ENCODE measurements at regions of chr7 and their contacts with region 1.

Region 1: DNA sequence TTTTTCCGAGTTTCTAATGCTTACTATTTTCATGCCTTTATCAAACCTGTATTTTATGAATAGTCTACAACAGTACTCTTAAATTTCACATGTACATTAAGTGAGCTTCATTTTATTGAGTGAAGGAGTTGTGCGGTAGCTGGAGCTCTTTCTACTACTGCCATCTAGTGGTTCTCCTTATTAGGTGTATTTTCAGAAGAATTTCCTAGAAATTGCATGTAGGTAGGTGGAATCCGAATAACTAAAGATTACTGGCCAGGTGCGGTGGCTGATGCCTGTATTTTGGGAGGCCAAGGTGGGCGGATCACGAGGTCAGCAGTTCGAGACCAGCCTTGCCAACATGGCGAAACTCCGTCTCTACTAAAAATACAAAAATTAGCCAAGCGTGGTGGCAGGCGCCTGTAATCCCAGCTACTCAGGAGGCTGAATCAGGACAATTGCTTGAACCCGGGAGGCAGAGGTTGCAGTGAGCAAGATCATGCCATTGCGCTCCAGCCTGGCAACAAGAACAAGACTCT is 38.3 kb downstream of the LRRC72 start:
- DNase-seq: no peak
- ATAC-seq: peak; percentile 47 to 50

Region 2: GRCh38 chr7:16078076-16078952 is 486.7 kb before region 1 on chr7:
- intact Hi-C with region 1: loop called (anchors 2 to 10 kb)
- DNase-seq: no peak
- ATAC-seq: peak; percentile 53 to 61

Region 3: GRCh38 chr7:16083931-16084330 is 481.0 kb before region 1 on chr7:
- intact Hi-C with region 1: loop called (anchors 2 to 10 kb)
- DNase-seq: no peak
- ATAC-seq: no peak

Region 4: GRCh38 chr7:16114633-16115032 is 450.3 kb before region 1 on chr7:
- intact Hi-C with region 1: loop called (anchors 5 to 10 kb)
- DNase-seq: no peak
- ATAC-seq: no peak

Region 5: DNA sequence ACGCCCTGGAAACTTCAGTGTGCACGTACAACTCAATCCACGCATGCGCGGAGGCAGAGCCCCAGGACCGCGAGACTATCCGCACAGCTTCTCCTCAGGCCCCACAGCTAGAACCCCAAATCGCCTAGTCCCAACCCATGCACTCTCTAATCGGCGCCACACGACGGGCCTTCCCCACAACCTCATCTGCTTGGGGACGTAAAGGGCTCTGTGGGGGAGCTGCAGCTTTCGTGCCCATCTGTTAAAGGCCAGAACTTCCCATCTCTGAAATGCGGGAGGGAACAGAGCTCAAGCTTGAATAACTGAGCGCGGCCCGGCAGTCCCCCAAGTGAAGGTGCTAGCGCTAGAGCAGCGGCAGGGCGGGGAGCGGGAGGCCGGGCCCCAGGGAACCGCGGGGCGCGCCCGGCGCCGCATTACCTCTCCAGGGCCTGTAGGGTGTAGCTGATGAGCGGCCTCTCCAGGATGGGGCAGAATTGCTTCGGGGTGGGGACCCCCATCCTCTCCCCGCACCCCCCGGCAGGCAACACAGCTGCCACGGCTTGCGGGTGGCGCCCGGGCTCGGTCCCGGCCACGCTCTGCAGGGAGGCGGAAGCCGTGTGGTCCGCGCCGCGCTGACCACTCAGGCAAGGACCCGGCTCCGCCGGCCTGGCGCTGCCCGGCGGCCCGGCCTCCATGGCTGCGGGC is 144.2 kb before region 1 on chr7:
- intact Hi-C with region 1: no loop called
- DNase-seq: peak; percentile 90
- ATAC-seq: peak; percentile 89 to 95

Region 6: DNA sequence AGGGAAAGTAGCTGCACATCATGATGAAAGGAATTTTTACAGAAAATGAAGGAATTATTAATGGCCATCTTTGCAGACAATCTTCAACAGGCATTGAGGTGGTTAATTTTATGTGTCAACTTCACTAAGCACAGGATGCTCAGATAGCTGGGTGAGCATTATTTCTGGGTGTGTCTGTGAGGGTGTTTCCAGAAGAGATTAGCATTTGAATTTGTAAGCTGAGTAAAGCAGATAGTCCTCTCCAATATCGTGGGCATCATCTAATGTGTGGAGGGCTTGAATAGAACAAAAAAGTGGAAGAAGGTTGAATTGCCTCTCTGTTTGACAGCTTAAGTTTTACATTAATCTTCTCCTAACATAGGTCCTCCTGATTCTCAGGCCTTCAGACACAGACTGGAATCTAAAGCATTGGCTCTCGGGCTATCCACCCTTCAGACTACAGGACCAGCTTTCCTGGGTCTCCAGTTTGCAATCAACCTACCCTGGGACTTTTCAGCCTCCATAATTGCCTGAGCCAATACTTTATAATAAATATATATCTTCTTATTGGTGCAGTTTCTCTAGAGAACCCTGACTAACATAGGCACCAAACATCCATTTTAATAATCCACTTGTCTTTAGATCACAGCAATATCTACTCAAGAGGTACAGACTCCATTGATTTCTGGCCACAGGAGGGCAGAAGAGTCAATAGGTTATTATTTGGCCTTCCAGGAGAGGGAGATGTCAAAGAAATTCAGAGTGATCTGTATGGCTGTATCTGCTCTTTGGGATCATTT is 133.1 kb before region 1 on chr7:
- intact Hi-C with region 1: loop called (anchors 2 to 10 kb)
- DNase-seq: no peak
- ATAC-seq: peak; percentile 58 to 76

Region 7: DNA sequence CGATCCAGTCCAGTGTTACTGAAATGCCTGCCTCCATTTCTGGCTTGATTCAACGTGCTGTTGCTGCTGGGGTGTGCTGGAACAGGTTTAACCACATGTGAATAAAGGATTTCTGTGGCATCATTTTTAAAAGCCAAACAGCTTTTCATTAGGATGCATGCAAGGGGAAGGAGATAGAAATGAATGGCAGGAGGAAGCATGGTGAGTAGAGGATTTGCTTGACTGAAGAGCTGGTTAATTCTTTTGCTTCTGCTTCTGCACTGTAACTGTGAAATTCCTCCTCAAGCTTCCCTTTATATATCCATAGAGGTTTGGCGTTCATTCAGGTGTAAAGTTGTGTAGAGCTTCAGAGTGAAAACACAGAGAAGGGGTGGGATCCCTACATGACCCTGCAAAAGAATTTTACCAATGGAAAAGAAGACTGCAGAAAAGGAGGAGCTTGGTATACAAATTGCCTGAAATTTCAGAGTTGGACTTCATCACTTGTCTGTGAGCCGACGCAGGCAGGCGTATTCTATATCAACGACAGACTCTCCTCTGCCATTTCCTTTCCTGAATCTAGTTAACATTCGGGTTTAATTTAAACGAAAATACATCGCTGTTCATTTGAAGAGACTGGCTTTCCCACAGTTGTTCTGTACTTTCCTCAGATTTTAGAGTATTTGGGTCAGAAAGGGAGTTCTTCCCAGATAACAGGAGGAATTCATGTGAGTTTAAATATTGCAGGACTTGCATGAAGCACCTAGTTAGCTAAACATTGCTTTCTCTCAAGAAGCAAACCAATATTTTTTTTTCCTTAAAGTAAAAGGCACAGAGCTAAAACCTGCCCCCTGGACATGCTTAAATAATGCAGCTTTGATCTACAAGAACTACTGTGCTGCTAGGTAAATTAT is 99.3 kb before region 1 on chr7 and contains the start of gene SOSTDC1:
- intact Hi-C with region 1: loop called in 1 of 2 experiments (anchors 10 kb)
- DNase-seq: no peak
- ATAC-seq: peak; percentile 63 to 89
- total RNA-seq, gene SOSTDC1: 2.8 to 8.0 TPM